HEK293T (cell line): ENCODE measurements at regions of chr15 and their contacts with region 1.

Region 1: GRCh38 chr15:66700802-66701421 is 1.1 kb upstream of the SMAD6 start:
- DNase-seq: peak; percentile 93

Region 2: DNA sequence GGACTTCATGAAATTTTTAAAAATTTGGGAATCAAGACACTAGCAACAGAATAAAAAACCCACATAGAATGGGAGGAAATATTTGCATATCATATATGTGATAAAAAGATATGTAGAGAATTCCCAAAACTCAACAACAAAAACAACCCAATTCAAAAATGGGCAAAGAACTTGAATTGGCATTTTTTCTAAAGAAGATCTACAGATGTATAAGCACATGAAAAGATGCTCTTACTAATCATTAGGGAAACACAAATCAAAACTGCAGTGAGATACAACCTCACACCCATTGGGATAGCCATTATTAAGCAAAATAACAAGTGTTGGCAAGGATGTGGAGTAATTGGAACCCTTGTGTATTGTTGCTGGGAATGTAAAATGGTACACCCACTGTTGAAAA is 145.2 kb before region 1 on chr15:
- CTCF ChIA-PET with region 1: no interaction called
- POLR2A ChIA-PET with region 1: no interaction called
- DNase-seq: no peak

Region 3: GRCh38 chr15:66619151-66619903 is 81.6 kb before region 1 on chr15:
- CTCF ChIA-PET with region 1: interaction called, 17 read pairs
- POLR2A ChIA-PET with region 1: interaction called, 8 read pairs
- DNase-seq: peak; percentile 83

Region 4: GRCh38 chr15:66679657-66680108 is 21.2 kb before region 1 on chr15:
- CTCF ChIA-PET with region 1: interaction called, 6 read pairs
- POLR2A ChIA-PET with region 1: interaction called, 10 read pairs
- DNase-seq: peak; percentile 52

Region 5: GRCh38 chr15:66723826-66724748 is 23.2 kb after region 1 on chr15:
- CTCF ChIA-PET with region 1: interaction called, 3 read pairs
- POLR2A ChIA-PET with region 1: interaction called, 11 read pairs
- DNase-seq: no peak

Region 6: DNA sequence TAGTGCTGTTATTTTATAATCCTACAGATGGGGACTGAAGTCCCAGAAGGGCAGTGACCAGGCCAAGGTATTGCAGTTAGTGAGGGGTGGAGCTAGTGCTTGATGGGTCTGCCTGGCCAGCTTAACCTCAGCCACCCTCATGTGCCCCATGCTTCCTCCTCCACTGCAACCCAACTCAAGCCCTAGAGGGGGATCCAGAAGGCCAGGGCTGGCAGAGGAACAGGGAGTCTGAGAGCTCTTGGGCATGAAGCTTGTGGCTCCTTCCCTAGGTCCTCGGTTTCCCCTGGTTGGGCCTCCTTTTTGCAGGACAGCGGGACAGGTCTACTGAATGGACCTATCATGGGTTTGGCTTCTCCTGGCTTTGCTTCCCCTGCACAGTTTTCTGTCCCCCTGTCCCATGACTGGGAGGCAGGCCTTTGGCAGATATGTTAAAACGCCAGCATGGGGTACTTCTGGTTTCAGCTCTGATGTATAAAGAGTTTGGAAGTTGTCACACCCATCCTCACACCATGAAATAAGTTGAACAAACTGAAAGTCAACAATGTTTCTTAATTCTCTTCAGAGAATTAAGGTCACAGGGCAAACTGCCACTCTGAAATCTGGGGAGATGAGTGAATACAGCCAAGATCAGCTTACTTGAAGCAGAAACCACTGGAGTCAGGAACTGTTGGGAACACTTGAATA is 104.4 kb after region 1 on chr15:
- CTCF ChIA-PET with region 1: no interaction called
- POLR2A ChIA-PET with region 1: no interaction called
- DNase-seq: no peak

Region 7: GRCh38 chr15:66830358-66830757 is 129.4 kb after region 1 on chr15:
- CTCF ChIA-PET with region 1: no interaction called
- POLR2A ChIA-PET with region 1: no interaction called
- DNase-seq: no peak